ENCODE measurements at regions of chr11 and their contacts with region 1.

Region 1: GRCh38 chr11:856397-856796 is 13.7 kb downstream of the TSPAN4 start:
- DNase-seq: no peak
- ATAC-seq: no peak; the same call in 1 of the 2 replicates
- H3K4me3 Mint-ChIP-seq: no peak overlapping the region
- H3K27ac Mint-ChIP-seq: no peak overlapping the region
- H3K4me1 Mint-ChIP-seq: peaks cover 22% of the 10 kb centered on the region
- H3K27me3 Mint-ChIP-seq: peaks cover 3% of the 10 kb centered on the region; the same call in 1 of the 2 replicates
- CTCF ChIP-seq: no peak

Region 2: DNA sequence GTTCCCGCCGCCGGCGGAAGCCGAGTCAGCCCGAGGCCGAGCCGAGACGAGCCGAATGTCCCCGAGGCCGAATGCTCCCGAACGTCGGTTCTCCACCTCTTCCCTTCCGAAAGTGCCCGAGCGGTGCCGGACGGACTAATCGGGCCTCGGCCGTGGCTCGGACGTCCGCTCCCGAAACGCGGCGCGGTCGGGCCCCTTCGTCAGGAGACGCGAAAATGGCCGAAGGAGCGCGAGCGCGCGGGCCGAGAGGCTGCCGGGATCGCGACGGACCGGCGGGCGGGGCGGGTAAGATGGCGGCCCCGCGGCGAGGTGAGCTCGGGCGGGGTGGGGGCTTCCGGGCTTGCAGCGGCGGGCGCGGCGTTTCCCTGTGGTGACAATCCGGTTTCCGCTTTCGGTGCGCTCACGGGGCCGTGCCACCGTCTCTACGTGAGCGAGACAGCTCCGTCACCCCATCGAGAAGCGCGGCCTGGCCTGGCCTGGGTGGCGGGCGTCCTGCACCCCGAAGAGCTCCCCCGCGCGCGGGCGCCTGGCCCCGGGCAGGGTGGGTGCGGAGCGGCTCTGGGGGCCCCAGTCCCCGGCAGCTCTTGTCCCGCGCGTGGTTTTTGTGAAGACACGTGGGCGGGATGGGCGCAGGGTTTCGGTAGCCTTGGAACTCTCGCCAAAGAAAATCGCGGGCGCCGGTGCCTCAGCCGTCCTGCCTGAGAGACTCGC is 160.7 kb before region 1 on chr11 and contains the start of gene TMEM80:
- CTCF ChIA-PET with region 1: no interaction called
- POLR2A ChIA-PET with region 1: no interaction called
- DNase-seq: peak; percentile 100
- ATAC-seq: peak; percentile 83
- H3K4me3 Mint-ChIP-seq: peak within 1 kb of the TSS; percentile 78
- H3K27ac Mint-ChIP-seq: peak within 1 kb of the TSS; percentile 91
- H3K4me1 Mint-ChIP-seq: peaks cover 34% of the 10 kb centered on the region
- H3K27me3 Mint-ChIP-seq: no peaks in the 10 kb centered on the region
- CTCF ChIP-seq: no peak
- total RNA-seq, gene TMEM80: 23.4 to 28.4 TPM (median 24.5 TPM) in 3 replicates

Region 3: GRCh38 chr11:842370-843002 is 13.9 kb before region 1 on chr11 and contains the starts of genes POLR2L and TSPAN4:
- CTCF ChIA-PET with region 1: interaction called, 24 read pairs
- POLR2A ChIA-PET with region 1: interaction called, 7 read pairs
- DNase-seq: peak; percentile 91
- ATAC-seq: peak; percentile 4
- H3K4me3 Mint-ChIP-seq: peak within 1 kb of the TSS; percentile 79
- H3K27ac Mint-ChIP-seq: peak within 1 kb of the TSS; percentile 60; the same call in 1 of the 2 replicates
- H3K4me1 Mint-ChIP-seq: peaks cover 23% of the 10 kb centered on the region
- H3K27me3 Mint-ChIP-seq: no peaks in the 10 kb centered on the region
- CTCF ChIP-seq: no peak
- total RNA-seq, gene POLR2L: 138 to 152 TPM (median 144 TPM) in 3 replicates
- total RNA-seq, gene TSPAN4: 92.8 to 95.2 TPM (median 94.3 TPM) in 3 replicates

Measured in WTC11 (cell line).